Endothelial cell of umbilical vein (primary cell): ENCODE measurements at regions of chr4 and their contacts with region 1.

Region 1: DNA sequence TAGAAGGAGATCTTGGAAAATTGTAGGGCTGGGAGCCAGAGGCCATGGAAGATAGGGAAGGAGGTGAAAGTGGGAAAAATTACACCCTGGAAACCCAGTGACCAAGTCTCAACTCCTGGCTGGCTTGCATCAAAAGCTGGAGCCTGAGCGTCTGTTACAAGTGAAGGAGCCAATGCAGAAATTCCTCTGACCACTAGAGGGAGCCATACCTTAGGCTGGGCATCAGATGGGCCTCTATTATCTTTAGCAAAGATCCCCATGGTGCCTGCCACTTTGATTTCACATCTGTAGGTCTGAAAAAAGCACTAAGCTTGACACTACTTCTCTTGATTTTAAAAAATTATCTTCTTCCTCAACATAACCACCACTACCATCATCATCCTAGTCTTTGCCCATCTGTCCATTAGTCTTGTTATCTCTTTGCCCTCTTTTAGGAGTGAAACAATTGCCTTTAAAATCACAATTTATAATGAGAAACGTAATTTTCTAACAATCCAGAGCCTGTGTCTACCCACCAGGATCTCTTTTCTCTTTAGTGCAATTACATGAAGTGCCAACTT is 62.9 kb downstream of the ANAPC4 start:
- DNase-seq: peak; percentile 71
- H3K4me3 ChIP-seq: no peak overlapping the region
- H3K27ac ChIP-seq: no peak overlapping the region
- H3K4me1 ChIP-seq: peaks cover 6% of the 10 kb centered on the region
- H3K27me3 ChIP-seq: no peaks in the 10 kb centered on the region
- CTCF ChIP-seq: peak; percentile 87 to 93
- POLR2A ChIP-seq: no peak

Region 2: DNA sequence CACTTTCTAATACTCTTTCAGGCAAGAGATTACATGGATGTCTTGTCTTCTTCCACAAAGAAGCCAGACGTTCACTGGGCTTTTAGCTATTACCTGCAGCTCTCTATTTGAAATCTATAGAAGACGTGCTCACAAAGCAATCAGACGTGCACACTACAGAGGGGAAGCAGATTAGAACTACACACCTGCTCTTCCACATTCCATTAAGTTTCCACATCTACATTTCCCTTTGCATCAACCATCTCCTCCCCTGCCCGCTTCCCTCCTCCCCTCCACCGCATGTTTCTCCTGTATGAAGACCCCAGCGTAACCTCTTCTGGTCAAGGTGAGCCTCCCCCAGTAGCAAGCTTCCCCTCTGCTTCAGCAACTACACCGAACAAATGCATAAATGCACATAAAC is 975.4 kb before region 1 on chr4:
- CTCF ChIA-PET with region 1: no interaction called
- POLR2A ChIA-PET with region 1: no interaction called
- dilution Hi-C with region 1: no loop called
- intact Hi-C with region 1: no loop called
- DNase-seq: no peak
- H3K4me3 ChIP-seq: no peak overlapping the region
- H3K27ac ChIP-seq: no peak overlapping the region
- H3K4me1 ChIP-seq: no peaks in the 10 kb centered on the region
- H3K27me3 ChIP-seq: peaks cover 24 to 29% of the 10 kb centered on the region in 2 experiments
- CTCF ChIP-seq: no peak
- POLR2A ChIP-seq: no peak

Region 3: GRCh38 chr4:25457053-25457715 is 17.2 kb after region 1 on chr4:
- CTCF ChIA-PET with region 1: interaction called, 35 read pairs
- POLR2A ChIA-PET with region 1: no interaction called
- dilution Hi-C with region 1: no loop called
- intact Hi-C with region 1: no loop called
- DNase-seq: peak; percentile 83
- H3K4me3 ChIP-seq: peak overlapping the region in 1 of 3 experiments; percentile 31
- H3K27ac ChIP-seq: peak overlapping the region; percentile 96
- H3K4me1 ChIP-seq: peaks cover 27% of the 10 kb centered on the region
- H3K27me3 ChIP-seq: no peaks in the 10 kb centered on the region
- CTCF ChIP-seq: no peak
- POLR2A ChIP-seq: peak; percentile 63

Region 4: GRCh38 chr4:25531272-25531671 is 91.3 kb after region 1 on chr4:
- CTCF ChIA-PET with region 1: interaction called, 24 read pairs
- POLR2A ChIA-PET with region 1: no interaction called
- dilution Hi-C with region 1: no loop called
- intact Hi-C with region 1: loop called (anchors 5 kb)
- DNase-seq: no peak
- H3K4me3 ChIP-seq: no peak overlapping the region
- H3K27ac ChIP-seq: no peak overlapping the region
- H3K4me1 ChIP-seq: no peaks in the 10 kb centered on the region
- H3K27me3 ChIP-seq: peaks cover 0 to 3% of the 10 kb centered on the region in 2 experiments
- CTCF ChIP-seq: peak; percentile 20 to 23
- POLR2A ChIP-seq: no peak

Region 5: DNA sequence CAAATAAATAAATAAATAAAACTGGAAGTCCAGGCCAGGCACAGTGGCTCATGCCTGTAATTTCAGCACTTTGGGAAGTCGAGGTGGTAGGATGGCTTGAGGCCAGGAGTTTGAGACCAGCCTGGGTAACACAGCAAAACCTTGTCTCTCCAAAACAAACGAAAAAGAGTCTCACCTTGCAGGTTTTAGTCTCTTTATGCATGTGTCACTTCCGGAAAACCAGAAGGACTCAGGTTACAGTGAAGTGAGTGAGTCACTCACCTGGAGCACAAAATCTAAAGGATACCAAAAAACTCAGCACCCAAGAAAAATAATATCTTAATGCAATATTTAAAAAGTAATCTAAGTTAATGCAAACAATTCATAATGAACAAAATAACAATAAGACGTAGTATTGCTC is 195.5 kb after region 1 on chr4:
- CTCF ChIA-PET with region 1: interaction called, 15 read pairs
- POLR2A ChIA-PET with region 1: no interaction called
- dilution Hi-C with region 1: no loop called
- intact Hi-C with region 1: no loop called
- DNase-seq: no peak
- H3K4me3 ChIP-seq: no peak overlapping the region
- H3K27ac ChIP-seq: no peak overlapping the region
- H3K4me1 ChIP-seq: no peaks in the 10 kb centered on the region
- H3K27me3 ChIP-seq: no peaks in the 10 kb centered on the region
- CTCF ChIP-seq: no peak
- POLR2A ChIP-seq: no peak

Region 6: DNA sequence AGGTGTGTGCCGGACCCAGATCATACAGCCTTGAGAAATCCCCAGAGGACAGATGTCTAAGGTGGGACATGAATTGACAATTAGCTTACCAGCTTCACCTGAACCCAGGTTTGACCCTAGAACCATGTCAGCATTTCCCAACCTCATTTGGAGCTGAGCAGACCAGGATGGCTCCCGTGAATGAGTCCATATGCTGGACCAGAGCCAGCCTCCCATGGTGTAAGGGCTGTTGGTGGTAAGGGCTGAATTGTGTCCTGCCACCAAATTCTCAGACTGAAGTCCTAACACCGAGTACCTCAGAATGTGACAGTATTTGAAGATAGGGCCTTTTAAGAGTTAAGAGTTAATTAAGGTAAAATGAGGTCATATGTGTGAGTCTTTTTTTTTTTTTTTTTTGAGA is 304.0 kb after region 1 on chr4:
- CTCF ChIA-PET with region 1: interaction called, 23 read pairs
- POLR2A ChIA-PET with region 1: no interaction called
- dilution Hi-C with region 1: no loop called
- intact Hi-C with region 1: no loop called
- DNase-seq: no peak
- H3K4me3 ChIP-seq: no peak overlapping the region
- H3K27ac ChIP-seq: no peak overlapping the region
- H3K4me1 ChIP-seq: no peaks in the 10 kb centered on the region
- H3K27me3 ChIP-seq: no peaks in the 10 kb centered on the region
- CTCF ChIP-seq: no peak
- POLR2A ChIP-seq: no peak

Region 7: GRCh38 chr4:25767877-25768725 is 328.1 kb after region 1 on chr4:
- CTCF ChIA-PET with region 1: interaction called, 414 read pairs
- POLR2A ChIA-PET with region 1: no interaction called
- dilution Hi-C with region 1: no loop called
- intact Hi-C with region 1: loop called (anchors 1 kb)
- DNase-seq: peak; percentile 79
- H3K4me3 ChIP-seq: no peak overlapping the region
- H3K27ac ChIP-seq: no peak overlapping the region
- H3K4me1 ChIP-seq: no peaks in the 10 kb centered on the region
- H3K27me3 ChIP-seq: no peaks in the 10 kb centered on the region
- CTCF ChIP-seq: peak; percentile 69 to 85
- POLR2A ChIP-seq: no peak

Region 8: GRCh38 chr4:25981749-25982148 is 541.8 kb after region 1 on chr4:
- CTCF ChIA-PET with region 1: no interaction called
- POLR2A ChIA-PET with region 1: no interaction called
- dilution Hi-C with region 1: no loop called
- intact Hi-C with region 1: loop called (anchors 10 kb)
- DNase-seq: no peak
- H3K4me3 ChIP-seq: no peak overlapping the region
- H3K27ac ChIP-seq: no peak overlapping the region
- H3K4me1 ChIP-seq: no peaks in the 10 kb centered on the region
- H3K27me3 ChIP-seq: peaks cover 0 to 5% of the 10 kb centered on the region in 2 experiments
- CTCF ChIP-seq: no peak
- POLR2A ChIP-seq: no peak